Activated B cell treated with CpG ODN at 0.5 μM for 24 hours (primary cell): ENCODE measurements at regions of chr6 and their contacts with region 1.

Region 1: DNA sequence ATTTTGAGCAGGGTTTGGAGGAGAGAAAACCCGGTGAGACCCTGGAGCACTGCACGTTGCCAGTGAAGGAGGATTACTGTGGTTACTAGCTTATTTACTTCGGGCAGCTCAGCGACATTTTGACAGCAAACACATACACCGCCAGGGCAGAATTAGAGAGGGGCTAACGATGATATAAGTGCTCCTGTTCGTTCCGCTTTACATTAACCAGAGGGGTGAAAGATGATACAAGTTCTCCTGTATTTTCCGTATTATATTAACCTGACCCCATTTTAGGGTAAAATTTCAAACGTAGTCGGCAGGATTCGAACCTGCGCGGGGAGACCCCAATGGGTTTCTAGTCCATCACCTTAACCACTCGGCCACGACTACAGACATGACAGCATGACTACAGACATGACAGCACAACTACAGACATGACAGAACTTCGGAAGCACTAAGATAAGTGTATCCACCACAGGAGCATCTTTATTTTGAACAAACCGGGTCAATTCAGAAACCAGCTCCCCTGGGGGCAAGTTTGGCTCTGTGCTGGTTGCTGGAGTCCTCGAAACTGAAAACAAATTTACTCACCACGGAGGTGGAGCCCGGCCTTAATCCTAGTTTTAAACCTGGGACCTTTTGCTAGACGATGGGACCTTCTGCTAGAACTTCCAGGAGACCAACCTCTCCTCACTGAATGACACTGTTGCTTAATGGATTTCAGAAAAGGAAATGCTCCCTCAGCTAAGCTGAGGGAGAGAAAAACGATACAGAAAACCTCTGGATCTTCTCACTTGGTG is 80.4 kb upstream of the ZNF184 start:
- DNase-seq: no peak
- ATAC-seq: no peak
- H3K4me3 Mint-ChIP-seq: no peak overlapping the region
- H3K27ac Mint-ChIP-seq: no peak overlapping the region
- H3K4me1 Mint-ChIP-seq: peaks cover 11% of the 10 kb centered on the region
- H3K27me3 Mint-ChIP-seq: peaks cover 63% of the 10 kb centered on the region
- CTCF ChIP-seq: no peak

Region 2: DNA sequence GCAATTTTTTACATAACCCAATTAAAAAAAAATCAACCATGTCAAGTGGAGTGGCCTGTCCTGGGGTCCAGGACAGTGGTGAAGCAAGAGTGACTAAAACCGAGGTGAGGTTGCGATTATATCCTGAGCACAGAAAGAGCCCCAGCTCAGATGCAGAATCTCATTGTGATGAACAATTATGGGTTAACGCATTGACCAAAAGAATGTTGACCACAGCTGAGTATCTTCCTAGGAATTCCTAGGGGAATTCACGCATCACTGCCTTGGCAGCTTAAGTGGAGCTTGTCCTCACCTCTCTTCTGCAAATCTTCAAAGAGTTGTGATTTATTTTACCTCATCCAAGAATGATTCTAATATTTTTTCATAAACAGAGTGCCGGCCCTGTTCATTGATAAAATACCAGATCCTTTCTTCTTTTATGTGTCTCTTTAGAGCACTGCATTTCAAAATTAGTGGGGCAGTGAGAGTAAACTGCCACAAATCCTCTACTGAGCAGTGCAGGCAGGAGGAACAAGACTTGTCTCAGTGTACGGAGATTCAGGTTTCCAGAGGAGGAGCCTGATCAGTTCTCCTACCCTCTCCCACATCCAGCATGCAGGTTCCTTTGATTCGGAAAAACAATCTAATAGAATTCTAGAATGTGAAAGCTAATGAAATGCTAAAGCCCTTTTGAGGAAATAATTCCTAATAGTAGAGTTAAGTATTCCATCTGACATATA is 20.3 kb before region 1 on chr6:
- CTCF ChIA-PET with region 1: no interaction called
- POLR2A ChIA-PET with region 1: no interaction called
- intact Hi-C with region 1: no loop called
- DNase-seq: no peak
- ATAC-seq: no peak
- H3K4me3 Mint-ChIP-seq: no peak overlapping the region
- H3K27ac Mint-ChIP-seq: no peak overlapping the region
- H3K4me1 Mint-ChIP-seq: no peaks in the 10 kb centered on the region
- H3K27me3 Mint-ChIP-seq: peaks cover 59% of the 10 kb centered on the region
- CTCF ChIP-seq: no peak

Region 3: GRCh38 chr6:27608916-27609883 is 55.9 kb after region 1 on chr6:
- CTCF ChIA-PET with region 1: no interaction called
- POLR2A ChIA-PET with region 1: no interaction called
- intact Hi-C with region 1: no loop called
- DNase-seq: no peak
- ATAC-seq: no peak
- H3K4me3 Mint-ChIP-seq: no peak overlapping the region
- H3K27ac Mint-ChIP-seq: no peak overlapping the region
- H3K4me1 Mint-ChIP-seq: peaks cover 7% of the 10 kb centered on the region
- H3K27me3 Mint-ChIP-seq: peaks cover 47% of the 10 kb centered on the region
- CTCF ChIP-seq: no peak

Region 4: DNA sequence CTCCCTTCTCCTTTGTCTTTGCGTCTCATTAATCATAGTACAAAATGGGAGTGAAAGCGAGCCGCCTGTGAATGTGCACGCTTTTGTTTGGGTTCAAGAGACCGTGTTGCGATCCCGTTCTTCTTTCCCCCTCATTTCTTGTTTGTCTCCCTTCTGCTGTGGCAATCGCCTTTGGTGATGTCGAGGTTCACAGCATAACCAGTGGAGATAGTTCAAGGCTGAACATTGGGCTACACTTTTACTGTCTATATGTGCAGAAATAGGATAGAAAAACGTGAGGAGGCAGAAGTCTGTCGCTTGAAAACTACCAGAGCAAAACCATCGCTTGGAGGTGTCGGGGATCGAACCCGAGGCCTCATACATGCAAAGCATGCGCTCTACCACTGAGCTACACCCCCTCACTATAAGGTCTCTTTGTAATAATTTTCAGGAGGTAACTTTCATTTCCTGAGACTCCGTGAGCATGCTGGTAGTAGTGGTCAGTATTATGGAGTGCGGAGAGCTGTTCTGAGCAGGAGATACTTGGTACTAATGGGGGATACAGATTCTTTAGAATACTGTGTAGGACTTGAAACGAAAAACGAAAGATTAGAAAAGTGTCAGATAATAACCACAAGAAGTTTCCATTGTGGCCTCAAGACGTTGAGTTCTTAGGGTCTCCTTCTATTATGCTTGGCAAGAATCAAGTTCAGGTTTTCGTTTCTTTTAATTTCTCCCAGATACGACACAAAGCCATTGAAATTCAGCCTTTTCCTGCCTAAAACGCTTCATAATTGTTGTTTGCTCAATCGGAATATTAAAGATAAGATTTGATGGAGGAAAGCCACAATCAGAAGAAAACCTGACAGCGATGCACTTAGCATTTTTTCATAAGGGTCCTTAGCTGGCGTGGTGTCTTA is 1263.8 kb after region 1 on chr6:
- CTCF ChIA-PET with region 1: no interaction called
- POLR2A ChIA-PET with region 1: no interaction called
- intact Hi-C with region 1: loop called (anchors 10 kb)
- DNase-seq: no peak
- ATAC-seq: no peak
- H3K4me3 Mint-ChIP-seq: no peak overlapping the region
- H3K27ac Mint-ChIP-seq: no peak overlapping the region
- H3K4me1 Mint-ChIP-seq: peaks cover 6% of the 10 kb centered on the region
- H3K27me3 Mint-ChIP-seq: peaks cover 69% of the 10 kb centered on the region
- CTCF ChIP-seq: no peak